CD4-positive, alpha-beta memory T cell (primary cell): ENCODE measurements at regions of chr11 and their contacts with region 1.

Region 1: GRCh38 chr11:59186130-59186594 is 14.2 kb downstream of the DTX4 start:
- DNase-seq: peak; percentile 37 to 56 (median 43)
- H3K4me3 ChIP-seq: no peak overlapping the region
- H3K4me3 Mint-ChIP-seq: no peak overlapping the region
- H3K27ac ChIP-seq: no peak overlapping the region
- H3K27ac Mint-ChIP-seq: no peak overlapping the region
- H3K4me1 ChIP-seq: no peaks in the 10 kb centered on the region
- H3K4me1 Mint-ChIP-seq: no peaks in the 10 kb centered on the region
- H3K27me3 ChIP-seq: no peaks in the 10 kb centered on the region
- H3K27me3 Mint-ChIP-seq: peaks cover 0 to 2% of the 10 kb centered on the region in 2 donors

Region 2: DNA sequence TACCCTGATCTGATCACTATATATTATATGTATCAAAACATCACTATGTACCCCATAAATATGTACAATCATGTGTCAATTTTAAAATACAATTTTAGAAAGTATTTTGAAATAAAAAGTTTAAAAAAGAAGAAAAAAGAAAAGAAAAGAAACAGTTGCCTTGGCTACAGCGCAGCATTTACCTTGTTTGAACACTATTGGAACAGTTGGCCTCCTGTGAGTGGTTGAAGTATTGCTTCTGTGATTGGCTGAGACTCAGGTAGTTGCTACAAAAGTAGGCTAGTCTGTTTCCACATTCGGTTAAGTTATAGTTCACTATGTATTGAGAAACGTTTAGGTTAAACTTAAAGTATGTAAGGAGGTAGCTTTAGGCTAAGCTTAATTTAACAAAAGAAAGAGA is 22.1 kb before region 1 on chr11:
- CTCF ChIA-PET with region 1: interaction called, 205 read pairs
- POLR2A ChIA-PET with region 1: no interaction called
- intact Hi-C with region 1: no loop called
- DNase-seq: no peak
- H3K4me3 ChIP-seq: no peak overlapping the region
- H3K4me3 Mint-ChIP-seq: no peak overlapping the region
- H3K27ac ChIP-seq: no peak overlapping the region
- H3K27ac Mint-ChIP-seq: no peak overlapping the region
- H3K4me1 ChIP-seq: no peaks in the 10 kb centered on the region
- H3K4me1 Mint-ChIP-seq: no peaks in the 10 kb centered on the region
- H3K27me3 ChIP-seq: peaks cover 3% of the 10 kb centered on the region
- H3K27me3 Mint-ChIP-seq: peaks cover 16 to 17% of the 10 kb centered on the region in 2 donors

Region 3: GRCh38 chr11:59197991-59198390 is 11.8 kb after region 1 on chr11:
- CTCF ChIA-PET with region 1: interaction called, 26 read pairs
- POLR2A ChIA-PET with region 1: no interaction called
- intact Hi-C with region 1: no loop called
- DNase-seq: no peak
- H3K4me3 ChIP-seq: no peak overlapping the region
- H3K4me3 Mint-ChIP-seq: no peak overlapping the region
- H3K27ac ChIP-seq: no peak overlapping the region
- H3K27ac Mint-ChIP-seq: no peak overlapping the region
- H3K4me1 ChIP-seq: peaks cover 7% of the 10 kb centered on the region
- H3K4me1 Mint-ChIP-seq: peaks cover 5 to 20% (median 13%) of the 10 kb centered on the region in 4 donors
- H3K27me3 ChIP-seq: no peaks in the 10 kb centered on the region
- H3K27me3 Mint-ChIP-seq: no peaks in the 10 kb centered on the region